ENCODE measurements at regions of chr1 and their contacts with region 1.

Region 1: GRCh38 chr1:164602480-164603093 is 43.6 kb downstream of the PBX1 start:
- DNase-seq: peak in 1 of 2 experiments; percentile 41
- H3K4me3 ChIP-seq: peak overlapping the region; percentile 15; the same call in 1 of the 2 replicates
- H3K4me3 Mint-ChIP-seq: peak overlapping the region; percentile 77
- H3K27ac Mint-ChIP-seq: peak overlapping the region; percentile 93
- H3K4me1 ChIP-seq: peaks cover 53% of the 10 kb centered on the region
- H3K4me1 Mint-ChIP-seq: peaks cover 42% of the 10 kb centered on the region
- H3K27me3 ChIP-seq: no peaks in the 10 kb centered on the region
- H3K27me3 Mint-ChIP-seq: no peaks in the 10 kb centered on the region
- CTCF ChIP-seq: no peak

Region 2: GRCh38 chr1:164518692-164519332 is 83.8 kb before region 1 on chr1:
- CTCF ChIA-PET with region 1: no interaction called
- POLR2A ChIA-PET with region 1: no interaction called
- intact Hi-C with region 1: loop called (anchors 5 kb)
- DNase-seq: peak in 1 of 2 experiments; percentile 13
- H3K4me3 ChIP-seq: no peak overlapping the region
- H3K4me3 Mint-ChIP-seq: no peak overlapping the region
- H3K27ac Mint-ChIP-seq: no peak overlapping the region
- H3K4me1 ChIP-seq: no peaks in the 10 kb centered on the region
- H3K4me1 Mint-ChIP-seq: no peaks in the 10 kb centered on the region
- H3K27me3 ChIP-seq: no peaks in the 10 kb centered on the region
- H3K27me3 Mint-ChIP-seq: no peaks in the 10 kb centered on the region
- CTCF ChIP-seq: peak in 1 of 2 experiments; percentile 21

Region 3: GRCh38 chr1:164558461-164559341 is 43.9 kb before region 1 on chr1 and contains the start of gene PBX1:
- CTCF ChIA-PET with region 1: interaction called, 3 read pairs
- POLR2A ChIA-PET with region 1: interaction called, 20 read pairs
- intact Hi-C with region 1: loop called (anchors 1 kb)
- DNase-seq: peak; percentile 97 to 99
- H3K4me3 ChIP-seq: peak within 1 kb of the TSS; percentile 74
- H3K4me3 Mint-ChIP-seq: peak within 1 kb of the TSS; percentile 81
- H3K27ac Mint-ChIP-seq: peak within 1 kb of the TSS; percentile 46
- H3K4me1 ChIP-seq: peaks cover 20% of the 10 kb centered on the region
- H3K4me1 Mint-ChIP-seq: peaks cover 7% of the 10 kb centered on the region
- H3K27me3 ChIP-seq: no peaks in the 10 kb centered on the region
- H3K27me3 Mint-ChIP-seq: no peaks in the 10 kb centered on the region
- CTCF ChIP-seq: no peak
- total RNA-seq, gene PBX1: 101 and 103 TPM in 2 replicates

Region 4: DNA sequence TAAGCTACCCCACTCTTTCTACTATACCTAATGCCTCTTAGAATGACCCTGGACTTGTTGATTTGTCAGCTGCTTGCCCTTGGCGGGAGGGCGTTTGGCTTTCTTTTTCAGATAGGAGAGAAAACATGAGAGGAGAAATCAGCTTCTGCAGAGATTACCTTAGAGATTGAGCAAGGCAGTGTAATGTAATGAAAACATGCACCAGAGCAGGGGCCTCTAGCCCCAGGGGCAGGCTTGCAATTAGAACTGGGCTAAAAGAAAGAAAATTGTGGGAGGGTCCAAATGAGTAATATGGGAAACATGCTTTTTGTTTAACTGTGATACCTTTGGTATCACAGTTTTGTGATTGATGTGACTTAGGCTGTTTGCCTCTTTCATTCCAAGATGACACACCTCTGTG is 46.0 kb after region 1 on chr1:
- CTCF ChIA-PET with region 1: interaction called, 3 read pairs
- POLR2A ChIA-PET with region 1: no interaction called
- intact Hi-C with region 1: loop called (anchors 1 kb)
- DNase-seq: peak; percentile 83 to 85
- H3K4me3 ChIP-seq: no peak overlapping the region
- H3K4me3 Mint-ChIP-seq: peak overlapping the region; percentile 44
- H3K27ac Mint-ChIP-seq: peak overlapping the region; percentile 80
- H3K4me1 ChIP-seq: peaks cover 59% of the 10 kb centered on the region
- H3K4me1 Mint-ChIP-seq: peaks cover 59% of the 10 kb centered on the region
- H3K27me3 ChIP-seq: no peaks in the 10 kb centered on the region
- H3K27me3 Mint-ChIP-seq: no peaks in the 10 kb centered on the region
- CTCF ChIP-seq: no peak

Region 5: GRCh38 chr1:164683235-164683634 is 80.6 kb after region 1 on chr1:
- CTCF ChIA-PET with region 1: no interaction called
- POLR2A ChIA-PET with region 1: no interaction called
- intact Hi-C with region 1: loop called (anchors 2 kb)
- DNase-seq: peak; percentile 78 to 85
- H3K4me3 ChIP-seq: no peak overlapping the region
- H3K4me3 Mint-ChIP-seq: peak overlapping the region; percentile 67
- H3K27ac Mint-ChIP-seq: peak overlapping the region; percentile 89
- H3K4me1 ChIP-seq: peaks cover 61% of the 10 kb centered on the region
- H3K4me1 Mint-ChIP-seq: peaks cover 42% of the 10 kb centered on the region
- H3K27me3 ChIP-seq: no peaks in the 10 kb centered on the region
- H3K27me3 Mint-ChIP-seq: no peaks in the 10 kb centered on the region
- CTCF ChIP-seq: no peak